Right ventricle myocardium superior (tissue), 1 donor: ENCODE measurements at regions of chr3 and their contacts with region 1.

Region 1: DNA sequence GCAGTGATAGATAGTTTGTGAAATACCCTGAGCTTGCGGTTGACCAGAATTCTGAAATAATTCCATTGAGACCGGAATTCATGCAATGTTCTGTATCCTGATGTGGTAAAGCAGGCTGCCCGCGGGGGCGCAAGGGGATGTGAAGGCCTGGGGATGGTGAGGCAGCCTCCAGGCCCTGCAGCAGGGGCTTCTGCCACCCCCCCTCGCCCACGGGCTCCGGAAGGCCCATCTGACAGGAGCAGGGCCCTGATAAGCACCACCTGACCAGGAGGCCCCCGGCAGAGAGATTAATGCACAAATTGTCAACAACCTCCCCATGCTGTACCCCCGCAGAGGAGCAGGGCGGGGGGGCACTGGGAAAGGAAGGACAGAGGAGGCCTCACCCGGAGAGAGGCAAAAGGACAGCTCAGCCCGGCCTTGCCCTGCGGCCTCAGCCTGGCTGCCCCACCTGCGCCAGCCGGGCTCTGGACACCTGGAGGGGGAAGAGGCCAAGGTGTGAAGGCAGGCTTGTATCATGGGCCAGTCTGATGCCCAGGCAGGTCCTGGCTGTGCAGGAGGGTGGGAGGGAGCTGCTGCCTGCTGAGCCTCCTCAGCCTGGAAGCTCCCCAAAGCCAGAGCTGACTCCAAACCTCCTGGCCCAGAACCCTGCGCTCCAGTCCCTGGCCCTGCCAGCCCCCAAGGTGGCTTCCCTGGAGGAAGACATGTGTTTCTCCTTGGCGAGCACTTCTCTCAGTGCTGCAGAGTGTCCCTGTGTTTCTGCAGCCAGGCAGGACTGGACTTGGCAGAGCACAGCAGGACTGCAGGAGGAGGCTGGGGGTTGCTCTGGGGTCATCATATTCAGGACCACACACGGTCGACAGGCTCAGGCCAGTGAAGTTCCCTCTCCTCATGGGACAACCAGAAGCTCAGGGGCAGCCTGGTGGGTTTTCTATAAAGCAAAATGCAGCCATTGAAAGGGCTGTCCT is 46.5 kb downstream of the RPN1 start:
- DNase-seq: no peak
- ATAC-seq: no peak

Region 2: DNA sequence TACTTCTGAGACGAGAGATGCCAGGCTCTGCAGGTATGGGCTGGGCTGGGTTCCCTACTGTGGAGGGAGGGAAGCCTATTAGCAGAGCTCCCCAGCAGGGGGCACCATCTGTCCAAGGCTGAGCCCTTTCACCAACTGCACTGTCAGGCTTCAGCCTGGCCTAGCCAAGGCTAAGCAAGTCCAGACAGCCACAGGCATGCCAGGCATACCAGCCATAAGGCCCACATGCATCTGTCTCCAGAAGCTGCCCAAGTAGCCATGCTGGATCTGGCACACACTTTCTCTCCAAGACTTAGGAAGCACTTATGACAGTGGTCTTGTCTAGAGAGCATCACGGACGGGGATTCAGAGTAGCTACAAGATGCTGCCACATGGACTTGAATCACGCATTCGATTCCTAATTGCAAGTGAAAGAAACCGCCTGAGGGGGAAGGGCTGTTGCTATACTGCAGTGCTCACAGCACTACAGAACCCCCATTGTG is 508.8 kb before region 1 on chr3:
- intact Hi-C with region 1: loop called (anchors 10 kb)
- DNase-seq: peak; percentile 90
- ATAC-seq: peak; percentile 99

Region 3: DNA sequence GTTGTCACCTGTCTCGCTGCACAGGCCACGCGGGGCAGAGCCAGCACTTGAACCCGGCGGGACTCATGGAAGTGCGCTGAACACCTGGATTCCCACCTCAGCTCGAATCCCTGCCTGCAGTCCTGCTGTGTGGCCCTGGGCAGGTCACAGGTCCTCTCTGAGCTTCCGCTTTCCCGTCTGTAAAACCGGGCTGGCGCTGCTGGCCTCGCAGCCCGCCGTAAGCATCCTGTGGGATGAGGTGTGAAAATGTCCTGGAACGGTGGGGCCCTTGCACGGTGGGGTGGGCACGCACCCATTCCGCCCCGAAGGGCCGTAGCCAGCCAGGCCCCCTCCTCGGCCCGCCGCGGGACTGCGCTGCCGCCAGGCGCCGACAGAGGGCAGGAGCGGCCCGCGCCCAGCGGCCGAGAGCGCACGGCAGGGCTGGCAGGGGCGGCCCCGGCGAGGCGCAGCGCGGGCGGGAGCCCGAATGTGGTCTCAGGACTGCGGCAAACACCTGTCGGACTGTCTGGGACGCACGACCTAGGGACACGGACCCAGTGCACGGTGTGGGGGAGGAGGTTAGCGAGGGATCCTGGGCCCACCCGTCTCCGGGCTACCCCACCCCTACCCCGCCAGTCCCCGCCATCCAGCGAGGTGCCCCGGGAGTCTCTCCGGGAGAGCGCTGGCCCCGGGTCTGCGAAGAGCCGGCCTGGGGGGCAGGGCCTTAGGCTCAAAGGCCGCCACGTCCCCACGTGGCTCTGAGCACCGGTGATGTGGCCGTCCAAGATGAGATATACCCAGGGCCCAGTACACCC is 177.8 kb before region 1 on chr3:
- intact Hi-C with region 1: loop called (anchors 5 kb)
- DNase-seq: peak; percentile 65
- ATAC-seq: peak; percentile 95